ENCODE measurements at regions of chr16 and their contacts with region 1.

Region 1: GRCh38 chr16:26756617-26757016 is 310.1 kb upstream of the C16orf82 start:
- DNase-seq: no peak
- ATAC-seq: no peak
- H3K4me3 ChIP-seq: no peak overlapping the region
- H3K27ac ChIP-seq: no peak overlapping the region
- H3K4me1 ChIP-seq: no peaks in the 10 kb centered on the region
- H3K27me3 ChIP-seq: no peaks in the 10 kb centered on the region
- CTCF ChIP-seq: no peak

Region 2: DNA sequence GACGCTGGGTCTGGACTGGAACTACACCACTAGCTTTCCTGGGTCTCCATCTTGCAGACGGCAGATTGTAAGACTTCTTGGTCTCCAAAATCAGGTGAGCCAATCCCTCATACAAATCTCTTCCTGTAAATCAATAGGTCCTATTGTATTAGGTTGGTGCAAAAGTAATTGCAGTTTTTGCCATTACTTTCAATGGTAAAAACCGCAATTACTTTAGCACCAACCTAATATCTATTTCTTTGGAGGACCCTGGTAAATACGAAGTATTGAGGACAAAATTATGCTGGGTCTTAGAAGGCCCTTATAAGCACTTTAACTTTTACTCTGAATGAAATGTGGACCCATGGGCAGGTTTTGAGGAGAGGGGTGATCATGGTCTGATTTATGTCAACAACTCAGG is 20.5 kb before region 1 on chr16:
- intact Hi-C with region 1: loop called in 1 of 10 experiments (anchors 2 kb)
- DNase-seq: no peak
- ATAC-seq: no peak
- H3K4me3 ChIP-seq: no peak overlapping the region
- H3K27ac ChIP-seq: no peak overlapping the region
- H3K4me1 ChIP-seq: peaks cover 0 to 13% (median 0%) of the 10 kb centered on the region in 9 donors
- H3K27me3 ChIP-seq: no peaks in the 10 kb centered on the region
- CTCF ChIP-seq: no peak